Naive thymus-derived CD4-positive, alpha-beta T cell (primary cell): ENCODE measurements at regions of chr10 and their contacts with region 1.

Region 1: DNA sequence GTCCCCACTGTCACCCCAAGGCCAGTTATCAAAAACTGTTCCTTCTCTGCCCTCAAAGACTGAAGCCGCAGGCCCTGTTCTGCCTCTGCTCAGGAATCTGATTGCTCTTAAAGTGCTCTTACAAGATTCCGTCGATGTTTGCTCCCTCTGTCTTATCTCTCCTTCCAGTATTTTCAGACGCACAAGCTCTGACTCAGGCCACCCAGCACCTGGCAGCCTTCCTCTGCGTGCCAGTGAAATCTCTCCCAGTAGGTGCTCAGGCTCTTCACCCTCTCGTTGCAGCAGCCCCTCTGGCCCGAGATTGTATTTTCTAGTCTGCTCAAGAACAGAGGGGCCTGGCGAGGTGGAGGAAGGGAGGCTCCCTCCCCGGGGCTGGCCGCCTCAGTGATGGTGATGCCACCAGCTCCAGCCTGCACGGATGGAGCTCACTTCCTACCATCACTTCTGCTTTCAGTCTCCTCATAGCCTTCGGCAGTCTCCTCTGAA is 276.2 kb downstream of the USP6NL start:
- DNase-seq: no peak
- ATAC-seq: peak; percentile 55
- H3K4me3 ChIP-seq: no peak overlapping the region
- H3K4me3 Mint-ChIP-seq: peak overlapping the region in 3 of 10 donors; percentile 1 to 52 (median 44)
- H3K27ac ChIP-seq: no peak overlapping the region
- H3K27ac Mint-ChIP-seq: peak overlapping the region; percentile 1 to 90 (median 77)
- H3K4me1 ChIP-seq: peaks cover 0 to under 1% of the 10 kb centered on the region in 2 donors
- H3K4me1 Mint-ChIP-seq: peaks cover 7 to 64% (median 51%) of the 10 kb centered on the region in 7 donors
- H3K27me3 ChIP-seq: no peaks in the 10 kb centered on the region
- H3K27me3 Mint-ChIP-seq: no peaks in the 10 kb centered on the region

Region 2: GRCh38 chr10:11113156-11113555 is 222.1 kb before region 1 on chr10:
- CTCF ChIA-PET with region 1: no interaction called
- POLR2A ChIA-PET with region 1: no interaction called
- intact Hi-C with region 1: loop called in 1 of 2 experiments (anchors 5 kb)
- DNase-seq: peak in 7 of 9 donors; percentile 48 to 69 (median 65)
- ATAC-seq: peak; percentile 97
- H3K4me3 ChIP-seq: no peak overlapping the region
- H3K4me3 Mint-ChIP-seq: peak overlapping the region in 9 of 10 donors; percentile 12 to 85 (median 63)
- H3K27ac ChIP-seq: peak overlapping the region; percentile 9
- H3K27ac Mint-ChIP-seq: peak overlapping the region in 8 of 9 donors; percentile 0 to 92 (median 72)
- H3K4me1 ChIP-seq: peaks cover 0 to 9% of the 10 kb centered on the region in 2 donors
- H3K4me1 Mint-ChIP-seq: peaks cover 10 to 56% (median 38%) of the 10 kb centered on the region in 7 donors
- H3K27me3 ChIP-seq: no peaks in the 10 kb centered on the region
- H3K27me3 Mint-ChIP-seq: peaks cover 0 to 5% (median 0%) of the 10 kb centered on the region in 5 donors

Region 3: GRCh38 chr10:11286261-11286852 is 48.9 kb before region 1 on chr10:
- CTCF ChIA-PET with region 1: no interaction called
- POLR2A ChIA-PET with region 1: no interaction called
- intact Hi-C with region 1: no loop called
- DNase-seq: no peak
- ATAC-seq: peak; percentile 17
- H3K4me3 ChIP-seq: no peak overlapping the region
- H3K4me3 Mint-ChIP-seq: no peak overlapping the region
- H3K27ac ChIP-seq: no peak overlapping the region
- H3K27ac Mint-ChIP-seq: peak overlapping the region in 8 of 9 donors; percentile 10 to 83 (median 69)
- H3K4me1 ChIP-seq: peaks cover 0 to 4% of the 10 kb centered on the region in 2 donors
- H3K4me1 Mint-ChIP-seq: peaks cover 7 to 20% (median 18%) of the 10 kb centered on the region in 7 donors
- H3K27me3 ChIP-seq: no peaks in the 10 kb centered on the region
- H3K27me3 Mint-ChIP-seq: no peaks in the 10 kb centered on the region